ENCODE measurements at regions of chr10 and their contacts with region 1.

Region 1: GRCh38 chr10:58350619-58351323 is 16.0 kb downstream of the UBE2D1 start:
- H3K4me3 Mint-ChIP-seq: no peak overlapping the region
- H3K27ac Mint-ChIP-seq: peak overlapping the region; percentile 72
- H3K4me1 Mint-ChIP-seq: peaks cover 67% of the 10 kb centered on the region
- H3K27me3 Mint-ChIP-seq: no peaks in the 10 kb centered on the region

Region 2: DNA sequence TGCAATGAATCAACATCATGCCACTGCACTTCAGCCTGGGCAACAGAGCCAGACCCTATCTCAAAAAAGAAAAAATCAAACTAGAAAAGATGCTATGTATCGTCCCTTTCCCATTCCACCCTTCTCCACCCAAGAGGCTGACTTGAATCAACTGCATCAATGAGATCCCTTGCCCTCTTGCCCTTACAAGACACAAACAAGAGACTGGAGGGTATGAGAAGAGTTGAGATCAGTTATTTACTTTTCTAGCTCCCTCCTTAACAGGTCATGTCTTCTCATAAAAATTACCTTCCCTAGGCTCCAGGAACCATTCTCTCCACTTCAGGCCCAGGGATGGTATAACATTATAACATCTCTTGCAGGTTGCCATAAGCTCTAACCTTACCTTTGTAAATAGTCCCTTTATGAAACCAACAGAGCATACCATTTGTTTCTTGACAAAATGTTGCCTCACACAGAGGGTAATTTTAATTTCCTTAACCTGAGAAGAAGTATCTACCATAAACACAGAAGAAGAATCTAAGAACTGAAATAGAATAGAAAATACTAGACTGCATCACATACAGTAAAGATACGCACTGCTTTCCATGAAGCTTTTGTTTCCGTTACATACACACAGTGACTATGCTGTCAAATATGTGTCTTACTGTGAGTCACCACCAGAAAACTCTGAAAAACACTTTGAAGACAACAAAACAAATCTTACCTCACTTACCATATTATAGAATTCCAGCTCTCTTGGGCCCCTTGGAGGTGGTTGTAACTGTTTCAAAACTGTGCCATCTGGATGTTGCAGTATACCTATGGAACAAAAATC is 113.5 kb before region 1 on chr10:
- intact Hi-C with region 1: no loop called
- H3K4me3 Mint-ChIP-seq: no peak overlapping the region
- H3K27ac Mint-ChIP-seq: no peak overlapping the region
- H3K4me1 Mint-ChIP-seq: peaks cover 34% of the 10 kb centered on the region
- H3K27me3 Mint-ChIP-seq: no peaks in the 10 kb centered on the region

Region 3: GRCh38 chr10:58322072-58322834 is 28.5 kb before region 1 on chr10:
- intact Hi-C with region 1: loop called (anchors 1 kb)
- H3K4me3 Mint-ChIP-seq: peak overlapping the region; percentile 26
- H3K27ac Mint-ChIP-seq: peak overlapping the region; percentile 74
- H3K4me1 Mint-ChIP-seq: peaks cover 23% of the 10 kb centered on the region
- H3K27me3 Mint-ChIP-seq: peaks cover 4% of the 10 kb centered on the region

Region 4: DNA sequence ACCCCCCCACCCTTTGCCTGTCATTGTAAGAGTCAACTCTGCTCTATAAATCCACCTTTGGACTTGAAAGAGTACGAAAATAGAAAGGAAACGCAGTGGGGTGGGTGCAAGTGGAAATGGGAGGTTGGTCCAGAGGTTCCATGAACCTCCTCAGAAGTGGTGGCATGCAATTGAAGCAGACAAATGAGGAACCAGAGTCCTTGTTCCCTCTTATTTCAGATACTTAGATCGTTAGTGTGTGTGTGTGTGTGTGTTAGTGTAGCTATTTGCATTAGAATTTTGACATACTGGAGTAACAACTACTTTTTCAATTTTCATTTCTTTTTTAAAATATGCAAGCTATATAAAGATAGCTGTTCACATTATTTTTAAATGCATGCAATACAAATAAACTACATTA is 16.3 kb after region 1 on chr10:
- intact Hi-C with region 1: loop called (anchors 2 kb)
- H3K4me3 Mint-ChIP-seq: no peak overlapping the region
- H3K27ac Mint-ChIP-seq: no peak overlapping the region
- H3K4me1 Mint-ChIP-seq: no peaks in the 10 kb centered on the region
- H3K27me3 Mint-ChIP-seq: no peaks in the 10 kb centered on the region

Region 5: DNA sequence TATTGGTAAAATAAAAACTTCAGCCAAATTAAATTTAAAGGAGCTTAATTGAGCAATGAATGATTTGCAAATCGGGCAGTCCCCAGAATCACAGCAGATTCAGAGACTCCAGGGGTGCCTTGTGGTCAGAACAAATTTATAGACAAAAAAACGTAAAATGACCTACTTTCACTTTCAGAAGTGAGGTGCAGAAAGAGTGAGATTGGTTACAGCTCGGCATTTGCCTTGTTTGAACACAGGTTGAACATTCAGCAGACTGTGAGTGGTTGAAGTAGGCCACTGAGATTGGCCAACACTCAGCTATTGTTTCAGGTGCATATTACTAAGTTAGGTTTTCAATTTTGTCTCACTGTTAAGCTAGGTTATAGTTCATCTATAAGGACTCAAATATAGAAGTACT is 315.3 kb after region 1 on chr10:
- intact Hi-C with region 1: no loop called
- H3K4me3 Mint-ChIP-seq: no peak overlapping the region
- H3K27ac Mint-ChIP-seq: no peak overlapping the region
- H3K4me1 Mint-ChIP-seq: peaks cover under 1% of the 10 kb centered on the region
- H3K27me3 Mint-ChIP-seq: no peaks in the 10 kb centered on the region

Measured in dendritic cell treated with granulocyte-macrophage colony-stimulating factor and Interleukin-4, amounts not matched to agents 40 ng/mL and 50 ng/mL, for 4 days (primary cell).